Esophagus squamous epithelium (tissue), 5 donors: ENCODE measurements at regions of chr7 and their contacts with region 1.

Region 1: DNA sequence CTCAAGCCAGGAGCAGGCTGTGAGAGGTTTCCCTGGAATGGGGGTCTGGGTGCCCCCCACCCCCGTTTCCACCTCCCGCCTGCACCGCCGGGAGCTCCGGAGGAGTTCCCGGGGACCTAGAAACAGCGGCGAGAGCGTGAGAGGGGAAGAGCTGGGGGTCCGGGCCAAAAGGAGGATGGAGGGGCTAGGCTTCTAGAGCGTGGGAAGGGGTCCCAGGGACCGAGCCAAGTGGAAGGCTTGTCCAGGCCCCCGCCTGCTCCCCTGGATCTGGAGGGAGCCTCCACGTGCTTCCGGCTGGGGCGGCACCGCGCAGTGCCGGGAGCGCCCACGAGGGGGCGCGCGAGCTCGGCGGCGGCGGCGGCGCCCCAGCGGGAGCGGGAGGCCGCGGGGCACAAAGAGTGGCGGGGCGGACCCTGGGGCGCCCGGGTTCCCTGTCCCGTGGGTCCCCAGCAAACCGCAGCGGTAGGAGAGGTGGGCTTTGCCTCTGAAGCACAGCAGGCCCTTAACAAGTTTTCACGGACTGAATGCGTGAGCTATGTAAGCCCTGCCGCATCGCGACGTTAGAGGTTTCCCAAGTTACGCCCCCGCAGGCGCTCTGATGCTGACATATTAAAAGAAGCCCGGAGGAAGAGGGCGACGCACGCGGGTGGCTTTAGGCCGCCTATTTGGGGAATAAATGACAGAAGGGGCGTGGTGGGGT is 104.4 kb upstream of the LRRC4 start:
- DNase-seq: no peak
- H3K4me3 ChIP-seq: peak overlapping the region; percentile 32 to 73 (median 52)
- H3K27ac ChIP-seq: no peak overlapping the region
- H3K4me1 ChIP-seq: peaks cover 10 to 23% (median 18%) of the 10 kb centered on the region in 3 donors
- H3K27me3 ChIP-seq: peaks cover 0 to 94% (median 8%) of the 10 kb centered on the region in 4 donors
- CTCF ChIP-seq: peak; percentile 36 to 98 (median 90)
- POLR2A ChIP-seq: no peak

Region 2: DNA sequence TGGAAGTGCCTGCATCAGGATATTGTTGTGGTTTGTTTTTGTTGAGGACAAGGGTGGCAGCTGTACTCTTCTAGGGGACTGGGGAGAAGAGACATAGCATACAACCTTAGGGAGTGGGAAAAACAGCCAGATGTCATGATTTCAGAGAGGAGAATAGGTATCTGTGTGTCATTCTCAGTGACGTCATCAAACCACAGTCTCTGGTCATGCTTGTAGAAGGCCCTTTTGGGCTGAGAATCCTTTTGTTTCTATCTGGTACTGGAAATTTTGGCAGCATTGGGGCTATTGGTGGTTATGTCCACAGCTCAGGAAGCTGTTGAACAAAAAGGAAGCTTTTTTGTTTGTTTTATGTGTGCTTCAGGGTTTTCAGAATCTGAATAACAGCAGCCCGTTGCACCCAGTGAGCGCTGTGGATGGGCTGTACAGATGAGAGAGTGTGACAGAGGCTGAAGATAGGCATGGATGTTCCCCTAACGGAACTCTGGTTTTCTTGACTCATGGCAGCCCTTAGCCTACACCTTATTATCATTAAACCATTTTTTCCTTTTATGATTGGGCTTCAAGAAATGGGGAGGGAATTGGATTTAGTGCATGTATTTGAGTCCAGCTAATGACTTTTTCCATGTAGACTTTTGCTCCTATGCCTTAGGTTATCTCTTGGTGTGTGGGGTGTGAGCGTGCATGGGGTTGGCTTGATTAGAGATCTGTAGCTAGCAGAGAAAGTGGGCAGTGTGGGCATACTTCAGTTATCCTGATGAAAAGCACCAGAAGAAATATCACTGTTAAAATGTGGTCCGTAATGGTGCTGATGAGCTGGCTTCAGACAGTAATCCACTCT is 417.9 kb before region 1 on chr7:
- intact Hi-C with region 1: loop called (anchors 10 kb)
- DNase-seq: no peak
- H3K4me3 ChIP-seq: no peak overlapping the region
- H3K27ac ChIP-seq: no peak overlapping the region
- H3K4me1 ChIP-seq: peaks cover 0 to 9% (median 4%) of the 10 kb centered on the region in 3 donors
- H3K27me3 ChIP-seq: no peaks in the 10 kb centered on the region
- CTCF ChIP-seq: no peak
- POLR2A ChIP-seq: no peak

Region 3: GRCh38 chr7:127959770-127960169 is 175.9 kb before region 1 on chr7:
- intact Hi-C with region 1: no loop called
- DNase-seq: no peak
- H3K4me3 ChIP-seq: no peak overlapping the region
- H3K27ac ChIP-seq: no peak overlapping the region
- H3K4me1 ChIP-seq: no peaks in the 10 kb centered on the region
- H3K27me3 ChIP-seq: no peaks in the 10 kb centered on the region
- CTCF ChIP-seq: no peak
- POLR2A ChIP-seq: no peak

Region 4: DNA sequence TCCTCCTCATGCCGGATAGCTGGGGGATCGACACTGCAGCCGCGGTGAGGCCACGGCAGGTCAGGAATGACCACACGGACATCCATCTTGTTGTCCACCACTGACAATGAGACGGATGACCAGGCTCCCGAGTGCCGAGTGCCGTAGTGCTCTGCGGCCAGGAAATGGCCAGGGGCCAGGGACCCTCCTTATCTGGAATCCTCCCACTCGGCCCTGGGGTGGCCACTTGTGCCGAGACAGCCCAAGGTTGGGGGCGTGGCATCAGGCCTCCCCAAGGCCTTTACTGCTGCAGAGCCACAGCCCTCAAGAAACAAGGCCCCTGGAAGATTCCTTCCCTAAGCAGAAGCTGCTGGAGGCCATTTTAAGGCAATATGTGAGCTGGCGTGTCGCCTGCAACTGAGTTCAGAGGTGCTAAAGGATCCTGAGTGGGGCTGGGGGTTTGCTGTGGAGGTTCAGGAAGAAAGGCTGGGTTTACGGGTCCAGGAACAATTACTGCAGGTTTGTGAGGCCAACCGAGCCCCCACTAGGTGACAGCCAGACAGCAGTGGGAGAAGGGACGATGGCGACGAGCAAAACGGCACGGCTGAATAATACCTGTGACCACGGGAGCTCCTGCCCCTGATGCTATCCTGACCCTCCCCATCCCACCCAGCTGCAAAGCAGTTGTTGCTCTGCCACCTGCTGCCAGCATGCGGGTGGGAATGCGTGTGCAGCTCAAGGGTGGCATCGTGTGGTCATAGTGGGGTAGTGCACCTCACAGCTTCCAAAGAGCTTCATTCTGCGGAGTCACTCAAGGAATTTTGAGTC is 73.8 kb after region 1 on chr7:
- intact Hi-C with region 1: loop called (anchors 5 kb)
- DNase-seq: no peak
- H3K4me3 ChIP-seq: no peak overlapping the region
- H3K27ac ChIP-seq: no peak overlapping the region
- H3K4me1 ChIP-seq: peaks cover 0 to 9% (median 0%) of the 10 kb centered on the region in 3 donors
- H3K27me3 ChIP-seq: peaks cover 0 to 62% (median 0%) of the 10 kb centered on the region in 4 donors
- CTCF ChIP-seq: peak; percentile 96 to 98 (median 97)
- POLR2A ChIP-seq: no peak

Region 5: DNA sequence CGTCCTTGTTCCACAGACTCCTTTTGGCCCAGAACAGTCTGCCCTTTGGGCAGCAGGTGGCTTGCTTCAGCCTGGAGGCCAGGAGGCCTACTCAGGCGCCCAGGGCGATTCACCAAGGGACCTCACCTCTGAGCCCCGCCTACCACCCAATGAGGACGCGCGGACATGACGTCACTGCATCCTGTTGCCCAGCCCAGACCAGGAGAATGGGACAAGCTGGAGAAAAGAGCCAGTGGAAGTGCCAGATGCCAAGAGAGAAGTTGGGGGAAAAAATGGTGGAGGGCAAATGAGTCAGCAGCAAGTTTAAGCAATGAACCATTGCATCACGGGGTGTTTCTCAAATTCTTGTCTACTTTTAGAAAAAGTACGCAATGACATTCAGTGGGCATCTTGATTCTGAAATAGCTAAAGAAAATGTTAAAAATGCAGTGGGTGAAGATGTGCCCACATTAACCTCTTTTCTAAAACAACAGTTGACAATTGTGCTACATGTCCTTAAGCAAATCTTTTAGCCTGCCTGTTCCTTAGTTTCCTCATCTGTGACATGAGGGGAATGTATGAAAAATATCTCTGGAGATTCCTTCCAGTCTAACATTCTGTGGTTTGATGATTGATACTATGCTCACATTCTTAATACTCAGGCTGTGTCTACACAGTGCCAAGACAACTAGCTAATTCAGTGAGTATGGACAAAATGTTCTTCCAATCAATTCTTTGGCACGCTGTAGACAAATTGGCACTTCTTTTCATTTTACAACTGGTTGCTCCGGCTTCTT is 81.6 kb after region 1 on chr7:
- intact Hi-C with region 1: loop called (anchors 5 kb)
- DNase-seq: no peak
- H3K4me3 ChIP-seq: no peak overlapping the region
- H3K27ac ChIP-seq: no peak overlapping the region
- H3K4me1 ChIP-seq: peaks cover 0 to 16% (median 0%) of the 10 kb centered on the region in 3 donors
- H3K27me3 ChIP-seq: peaks cover 0 to 6% (median 0%) of the 10 kb centered on the region in 4 donors
- CTCF ChIP-seq: no peak
- POLR2A ChIP-seq: no peak